GM13976 (cell line): ENCODE measurements at regions of chr7 and their contacts with region 1.

Region 1: GRCh38 chr7:111741811-111742240 is 179.5 kb upstream of the IMMP2L start:
- DNase-seq: peak; percentile 71
- CTCF ChIP-seq: peak; percentile 50

Region 2: DNA sequence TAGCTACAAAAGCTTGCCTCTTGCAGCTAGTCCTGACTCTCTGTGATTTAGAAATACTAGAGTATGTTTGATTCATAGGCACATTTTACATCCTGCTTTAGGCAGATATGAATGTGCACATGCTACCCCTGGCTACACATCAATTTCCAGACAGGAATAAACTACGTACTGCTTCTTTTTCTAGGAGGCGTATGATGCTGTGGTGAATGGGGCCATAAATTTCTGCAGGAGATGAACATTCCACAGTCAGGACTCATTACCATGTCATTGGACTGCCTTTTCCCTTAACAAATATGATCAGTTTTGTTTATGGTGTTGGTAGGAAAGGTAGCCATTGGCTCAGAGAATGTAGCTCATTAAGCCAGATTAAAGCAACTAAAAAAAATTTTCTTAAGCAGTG is 658.3 kb after region 1 on chr7:
- in situ Hi-C with region 1: loop called (anchors 10 kb)
- DNase-seq: no peak
- CTCF ChIP-seq: no peak